ENCODE measurements at regions of chr11 and their contacts with region 1.

Region 1: DNA sequence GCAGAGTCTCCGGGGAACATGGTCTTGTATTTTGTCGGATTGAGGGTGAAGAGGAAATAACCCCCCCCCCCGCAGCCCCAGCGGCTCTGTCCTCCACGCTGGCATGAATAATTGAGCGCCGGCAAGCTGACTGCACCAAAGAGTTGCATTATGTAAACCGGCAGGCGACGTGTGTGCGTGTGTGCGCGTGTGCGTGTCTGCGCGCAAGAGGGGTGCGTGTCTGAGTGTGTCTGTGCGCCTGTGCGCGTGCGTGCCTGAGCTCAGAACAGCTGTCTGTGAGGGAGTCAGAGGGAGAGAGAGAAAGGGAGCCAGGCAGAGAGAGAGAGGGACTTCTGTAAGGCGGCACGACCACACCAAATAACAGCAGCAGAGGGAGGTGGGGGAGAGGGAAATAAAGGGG is 94.4 kb downstream of the SCN3B start:
- DNase-seq: no peak
- ATAC-seq: no peak
- H3K4me3 ChIP-seq: no peak overlapping the region
- H3K27ac ChIP-seq: no peak overlapping the region
- H3K4me1 ChIP-seq: peaks cover 0 to 4% of the 10 kb centered on the region in 2 experiments; a peak in 2 of 4 replicates
- H3K27me3 ChIP-seq: no peaks in the 10 kb centered on the region
- CTCF ChIP-seq: no peak
- POLR2A ChIP-seq: no peak
- RAD21 ChIP-seq: no peak

Region 2: DNA sequence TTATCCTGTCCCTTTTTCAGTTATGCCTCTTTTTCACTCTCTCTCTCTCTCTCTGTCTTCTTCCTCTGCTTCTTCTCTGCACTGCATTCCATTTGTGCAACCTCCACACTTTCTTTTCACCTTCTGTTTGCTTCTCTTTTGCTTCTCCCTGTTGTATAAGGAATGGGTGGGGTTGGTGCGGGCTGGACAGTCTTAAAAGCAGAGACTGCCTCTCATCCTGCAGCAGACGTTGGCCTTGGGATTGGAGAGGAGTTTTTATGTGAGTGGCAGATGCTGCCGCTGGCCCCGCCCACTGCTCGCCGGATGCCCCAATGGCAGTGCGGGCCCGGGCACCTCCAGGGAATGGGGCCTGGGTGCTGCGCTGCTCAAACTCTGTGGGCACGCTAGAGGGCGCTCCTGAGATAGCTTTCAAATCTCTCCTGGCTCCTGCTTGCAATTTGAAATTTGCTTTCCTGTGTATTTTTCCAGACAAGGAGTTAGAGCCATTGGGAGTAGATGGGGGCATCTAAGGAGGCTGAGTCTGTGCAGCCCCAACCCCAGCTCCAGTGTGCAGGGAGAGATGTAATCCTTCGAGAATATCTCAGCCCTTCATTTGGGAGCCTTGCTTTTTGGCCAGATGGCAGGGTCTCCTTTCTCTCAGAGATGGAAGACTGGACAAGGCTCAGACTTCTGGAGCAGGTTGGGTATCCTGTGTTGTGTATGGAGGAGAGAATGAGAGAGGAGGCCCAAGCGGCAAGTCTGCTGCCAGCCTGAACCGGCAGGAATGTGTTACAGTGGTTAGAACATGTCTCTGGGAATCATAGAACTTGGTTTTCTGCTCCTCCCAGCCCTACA is 48.8 kb before region 1 on chr11:
- CTCF ChIA-PET with region 1: interaction called, 5 read pairs
- POLR2A ChIA-PET with region 1: no interaction called
- RAD21 ChIA-PET with region 1: no interaction called
- intact Hi-C with region 1: loop called (anchors 2 kb)
- DNase-seq: peak; percentile 74
- ATAC-seq: peak; percentile 100
- H3K4me3 ChIP-seq: no peak overlapping the region
- H3K27ac ChIP-seq: no peak overlapping the region
- H3K4me1 ChIP-seq: peaks cover 5 to 6% of the 10 kb centered on the region in 2 experiments; a peak in 3 of 4 replicates
- H3K27me3 ChIP-seq: no peaks in the 10 kb centered on the region; the same call in 1 of the 2 replicates
- CTCF ChIP-seq: peak; percentile 82 to 95 (median 89)
- POLR2A ChIP-seq: no peak
- RAD21 ChIP-seq: peak; percentile 88

Measured in HCT116 (cell line).